T-cell (primary cell): ENCODE measurements at regions of chr6 and their contacts with region 1.

Region 1: GRCh38 chr6:26025894-26026832 is 61.1 kb upstream of the HFE start:
- DNase-seq: peak; percentile 70 to 98 (median 96)
- ATAC-seq: peak; percentile 33 to 46 (median 36)
- H3K4me3 ChIP-seq: peak overlapping the region; percentile 63 to 88
- H3K4me3 Mint-ChIP-seq: peak overlapping the region; percentile 82 to 93 (median 92)
- H3K27ac ChIP-seq: peak overlapping the region; percentile 93
- H3K27ac Mint-ChIP-seq: peak overlapping the region; percentile 93 to 99
- H3K4me1 ChIP-seq: peaks cover 22 to 24% of the 10 kb centered on the region in 2 experiments
- H3K4me1 Mint-ChIP-seq: peaks cover 43 to 53% (median 44%) of the 10 kb centered on the region in 3 donors
- H3K27me3 ChIP-seq: no peaks in the 10 kb centered on the region
- H3K27me3 Mint-ChIP-seq: peaks cover 0 to 2% of the 10 kb centered on the region in 2 donors

Region 2: DNA sequence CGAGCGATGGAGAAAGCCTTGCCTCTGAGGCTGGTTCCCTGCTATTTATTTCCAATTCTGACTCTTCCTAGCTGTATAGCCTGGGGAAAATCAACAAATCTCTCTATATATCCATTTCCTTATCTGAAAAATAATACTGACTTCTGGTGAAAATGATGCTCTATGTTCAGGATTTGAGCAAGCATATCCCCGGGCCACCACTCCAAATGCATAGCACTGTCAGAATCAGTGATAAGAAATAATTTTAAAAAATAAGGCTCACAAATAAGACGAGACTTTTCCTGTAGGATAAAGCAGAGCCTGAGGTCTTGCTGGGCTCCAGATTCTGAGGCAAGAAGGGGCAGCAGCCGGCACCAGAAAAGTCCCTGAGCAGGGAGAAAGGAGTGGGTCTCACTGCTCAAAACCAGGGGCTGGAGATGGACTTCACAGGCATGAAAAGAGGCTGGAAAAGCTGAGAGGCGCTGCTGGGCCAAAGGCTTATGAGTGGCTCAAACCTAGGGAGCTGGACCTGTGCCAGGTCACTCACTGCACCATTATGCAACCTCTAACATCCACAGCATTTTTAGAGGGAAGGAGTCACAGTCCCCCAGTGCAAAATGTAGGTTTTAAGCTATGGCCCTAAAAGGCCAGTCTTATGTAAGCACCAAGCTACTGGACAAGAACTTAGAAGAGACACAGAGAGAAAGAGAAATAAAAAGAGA is 319.7 kb before region 1 on chr6:
- CTCF ChIA-PET with region 1: no interaction called
- POLR2A ChIA-PET with region 1: no interaction called
- DNase-seq: no peak
- ATAC-seq: no peak
- H3K4me3 ChIP-seq: no peak overlapping the region
- H3K4me3 Mint-ChIP-seq: no peak overlapping the region
- H3K27ac ChIP-seq: no peak overlapping the region
- H3K27ac Mint-ChIP-seq: no peak overlapping the region
- H3K4me1 ChIP-seq: no peaks in the 10 kb centered on the region
- H3K4me1 Mint-ChIP-seq: no peaks in the 10 kb centered on the region
- H3K27me3 ChIP-seq: peaks cover 0 to 4% of the 10 kb centered on the region in 2 experiments
- H3K27me3 Mint-ChIP-seq: peaks cover 8 to 27% of the 10 kb centered on the region in 2 donors

Region 3: DNA sequence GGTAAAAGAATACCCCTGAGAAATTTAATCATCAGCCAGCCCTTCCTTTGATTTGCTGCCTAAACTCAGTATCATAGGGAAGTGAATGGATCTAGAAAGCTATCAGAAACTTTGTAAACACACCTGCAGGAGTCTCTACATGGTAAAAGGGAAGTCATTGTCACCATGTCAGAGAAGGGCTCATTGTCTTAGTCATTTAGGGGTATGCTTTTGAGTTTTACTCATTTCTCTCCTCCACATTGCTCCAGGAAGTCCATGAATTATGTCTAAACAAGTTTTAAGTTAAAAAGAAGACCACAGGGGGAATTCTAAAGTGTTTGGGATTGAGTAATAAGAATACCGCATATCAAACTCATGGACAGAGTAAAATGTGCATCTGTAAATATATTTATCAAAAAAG is 196.8 kb before region 1 on chr6:
- CTCF ChIA-PET with region 1: no interaction called
- POLR2A ChIA-PET with region 1: no interaction called
- DNase-seq: no peak
- ATAC-seq: no peak
- H3K4me3 ChIP-seq: no peak overlapping the region
- H3K4me3 Mint-ChIP-seq: no peak overlapping the region
- H3K27ac ChIP-seq: no peak overlapping the region
- H3K27ac Mint-ChIP-seq: no peak overlapping the region
- H3K4me1 ChIP-seq: no peaks in the 10 kb centered on the region
- H3K4me1 Mint-ChIP-seq: no peaks in the 10 kb centered on the region
- H3K27me3 ChIP-seq: no peaks in the 10 kb centered on the region
- H3K27me3 Mint-ChIP-seq: peaks cover 19 to 26% of the 10 kb centered on the region in 2 donors

Region 4: DNA sequence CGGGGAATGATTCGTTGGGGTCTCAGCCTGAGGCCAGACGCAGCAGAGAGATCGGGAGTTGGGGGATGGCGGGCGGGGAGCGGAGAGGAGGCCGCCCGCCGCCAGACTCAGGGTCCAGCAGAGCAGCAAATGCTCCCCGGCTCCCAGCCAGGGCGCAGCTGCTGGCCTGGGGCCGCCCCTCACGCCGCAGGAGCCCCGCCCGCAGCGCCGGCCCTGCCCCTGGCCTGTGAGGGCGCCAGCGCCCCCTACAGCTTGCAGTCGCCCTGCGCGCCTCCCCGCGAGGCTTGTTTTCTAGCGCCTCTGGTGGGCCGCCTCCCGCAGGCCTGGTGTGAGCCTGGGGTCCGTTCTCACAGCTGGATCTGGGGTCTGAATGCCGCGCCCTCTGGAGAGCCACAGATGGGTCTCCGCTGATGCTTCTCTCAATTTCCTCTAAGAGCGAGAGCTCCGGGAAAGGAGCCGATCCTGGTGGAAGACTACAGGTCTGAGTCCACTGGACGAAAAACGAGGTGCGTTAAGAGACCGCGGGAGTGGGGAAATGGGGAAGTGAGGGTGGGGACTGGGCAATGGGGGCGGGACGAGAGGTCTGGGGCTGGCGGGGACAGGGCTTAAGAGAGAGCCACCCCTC is 33.6 kb before region 1 on chr6:
- CTCF ChIA-PET with region 1: interaction called in 1 of 2 experiments, 14 read pairs
- POLR2A ChIA-PET with region 1: interaction called, 7 to 19 read pairs
- DNase-seq: peak; percentile 77 to 96 (median 89)
- ATAC-seq: peak; percentile 94 to 98 (median 96)
- H3K4me3 ChIP-seq: peak overlapping the region; percentile 70 to 89
- H3K4me3 Mint-ChIP-seq: peak overlapping the region; percentile 91 to 95 (median 94)
- H3K27ac ChIP-seq: peak overlapping the region; percentile 77
- H3K27ac Mint-ChIP-seq: peak overlapping the region; percentile 92 to 94
- H3K4me1 ChIP-seq: peaks cover 9 to 17% of the 10 kb centered on the region in 2 experiments
- H3K4me1 Mint-ChIP-seq: peaks cover 21 to 36% (median 27%) of the 10 kb centered on the region in 3 donors
- H3K27me3 ChIP-seq: no peaks in the 10 kb centered on the region
- H3K27me3 Mint-ChIP-seq: no peaks in the 10 kb centered on the region

Region 5: GRCh38 chr6:26003102-26003694 is 23.0 kb before region 1 on chr6:
- CTCF ChIA-PET with region 1: interaction called, 4 to 16 read pairs
- POLR2A ChIA-PET with region 1: interaction called, 6 read pairs
- DNase-seq: peak in 26 of 35 experiments; percentile 11 to 69 (median 34)
- ATAC-seq: peak in 2 of 4 experiments; percentile 30 to 55
- H3K4me3 ChIP-seq: no peak overlapping the region
- H3K4me3 Mint-ChIP-seq: no peak overlapping the region
- H3K27ac ChIP-seq: no peak overlapping the region
- H3K27ac Mint-ChIP-seq: no peak overlapping the region
- H3K4me1 ChIP-seq: peaks cover 0 to 6% of the 10 kb centered on the region in 2 experiments
- H3K4me1 Mint-ChIP-seq: peaks cover 4 to 7% (median 6%) of the 10 kb centered on the region in 3 donors
- H3K27me3 ChIP-seq: no peaks in the 10 kb centered on the region
- H3K27me3 Mint-ChIP-seq: no peaks in the 10 kb centered on the region

Region 6: DNA sequence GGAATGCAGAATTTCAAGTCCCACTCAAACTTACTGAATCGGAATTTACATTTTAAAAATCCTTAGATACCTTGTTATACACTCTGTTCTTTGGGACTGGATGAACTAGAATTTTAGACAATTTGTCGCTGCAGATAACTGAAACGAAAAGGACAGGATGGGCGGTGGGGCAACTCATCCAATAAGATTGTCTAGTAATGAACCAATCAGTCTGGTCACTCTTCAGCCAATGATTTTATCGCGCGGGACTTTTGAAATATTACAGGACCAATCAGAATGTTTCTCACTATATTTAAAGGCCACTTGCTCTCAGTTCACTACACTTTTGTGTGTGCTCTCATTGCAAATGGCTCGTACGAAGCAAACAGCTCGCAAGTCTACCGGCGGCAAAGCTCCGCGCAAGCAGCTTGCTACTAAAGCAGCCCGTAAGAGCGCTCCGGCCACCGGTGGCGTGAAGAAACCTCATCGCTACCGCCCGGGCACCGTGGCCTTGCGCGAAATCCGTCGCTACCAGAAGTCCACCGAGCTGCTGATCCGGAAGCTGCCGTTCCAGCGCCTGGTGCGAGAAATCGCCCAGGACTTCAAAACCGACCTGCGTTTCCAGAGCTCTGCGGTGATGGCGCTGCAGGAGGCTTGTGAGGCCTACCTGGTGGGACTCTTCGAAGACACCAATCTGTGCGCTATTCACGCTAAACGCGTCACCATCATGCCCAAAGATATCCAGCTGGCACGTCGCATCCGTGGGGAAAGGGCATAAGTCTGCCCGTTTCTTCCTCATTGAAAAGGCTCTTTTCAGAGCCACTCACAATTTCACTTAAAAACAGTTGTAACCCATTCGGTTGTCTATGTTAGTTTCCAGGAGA is 19.1 kb after region 1 on chr6:
- CTCF ChIA-PET with region 1: interaction called, 9 to 76 read pairs
- POLR2A ChIA-PET with region 1: interaction called, 56 to 682 read pairs
- DNase-seq: peak; percentile 45 to 90 (median 78)
- ATAC-seq: peak; percentile 63 to 66 (median 64)
- H3K4me3 ChIP-seq: peak overlapping the region; percentile 77 to 83
- H3K4me3 Mint-ChIP-seq: peak overlapping the region; percentile 84 to 91 (median 90)
- H3K27ac ChIP-seq: peak overlapping the region; percentile 90
- H3K27ac Mint-ChIP-seq: peak overlapping the region; percentile 98
- H3K4me1 ChIP-seq: peaks cover 5 to 26% of the 10 kb centered on the region in 2 experiments
- H3K4me1 Mint-ChIP-seq: peaks cover 15 to 27% (median 26%) of the 10 kb centered on the region in 3 donors
- H3K27me3 ChIP-seq: no peaks in the 10 kb centered on the region
- H3K27me3 Mint-ChIP-seq: no peaks in the 10 kb centered on the region

Region 7: DNA sequence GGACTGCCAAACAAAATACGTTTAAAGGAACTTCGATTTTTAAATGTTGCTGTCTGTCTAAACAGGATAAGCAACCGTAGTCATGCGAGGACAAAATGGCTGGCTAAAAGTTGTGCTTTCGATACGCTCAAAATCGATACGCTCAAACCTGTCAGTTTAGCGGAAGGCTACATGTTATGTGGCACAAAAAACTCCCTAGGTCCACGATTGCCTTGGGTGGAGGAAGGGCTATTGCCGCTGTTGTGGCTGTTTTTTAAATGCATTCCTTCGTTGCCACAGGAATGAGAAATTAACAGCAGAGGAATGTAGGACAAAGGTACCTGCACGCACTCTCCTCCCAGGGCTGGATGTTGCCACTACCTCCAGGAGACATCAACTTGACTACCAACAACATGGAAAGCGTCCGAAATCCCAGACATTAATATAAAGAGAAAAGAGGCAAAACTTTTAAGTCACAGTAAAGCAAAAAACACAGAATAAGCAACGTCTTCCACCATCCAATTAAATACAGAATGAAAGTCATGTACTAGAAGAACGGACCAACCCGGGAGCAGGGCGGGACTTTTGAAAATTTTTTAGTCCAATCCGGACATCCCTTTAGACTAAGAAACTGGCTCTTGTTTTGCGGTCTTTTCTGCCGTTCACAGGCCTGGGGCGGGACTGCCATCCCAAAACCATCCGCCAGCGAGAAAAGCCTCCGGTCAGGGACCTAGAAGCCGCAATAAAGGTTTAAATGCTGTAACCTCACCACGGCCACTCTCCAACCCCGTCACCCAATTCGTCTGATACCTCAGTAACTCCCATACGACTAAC is 28.9 kb after region 1 on chr6:
- CTCF ChIA-PET with region 1: interaction called in 1 of 2 experiments, 19 read pairs
- POLR2A ChIA-PET with region 1: interaction called, 5 to 30 read pairs
- DNase-seq: peak; percentile 63 to 95 (median 86)
- ATAC-seq: peak; percentile 60 to 73 (median 67)
- H3K4me3 ChIP-seq: peak overlapping the region; percentile 87 to 98
- H3K4me3 Mint-ChIP-seq: peak overlapping the region; percentile 95 to 97 (median 96)
- H3K27ac ChIP-seq: peak overlapping the region; percentile 96
- H3K27ac Mint-ChIP-seq: peak overlapping the region; percentile 97 to 100
- H3K4me1 ChIP-seq: peaks cover 16 to 26% of the 10 kb centered on the region in 2 experiments
- H3K4me1 Mint-ChIP-seq: peaks cover 21 to 26% (median 23%) of the 10 kb centered on the region in 3 donors
- H3K27me3 ChIP-seq: no peaks in the 10 kb centered on the region
- H3K27me3 Mint-ChIP-seq: no peaks in the 10 kb centered on the region

Region 8: GRCh38 chr6:26065952-26066380 is 39.8 kb after region 1 on chr6:
- CTCF ChIA-PET with region 1: interaction called in 1 of 2 experiments, 11 read pairs
- POLR2A ChIA-PET with region 1: interaction called in 1 of 2 experiments, 5 read pairs
- DNase-seq: peak in 30 of 35 experiments; percentile 26 to 84 (median 41)
- ATAC-seq: peak; percentile 85 to 88 (median 86)
- H3K4me3 ChIP-seq: no peak overlapping the region
- H3K4me3 Mint-ChIP-seq: no peak overlapping the region
- H3K27ac ChIP-seq: no peak overlapping the region
- H3K27ac Mint-ChIP-seq: no peak overlapping the region
- H3K4me1 ChIP-seq: peaks cover 0 to 3% of the 10 kb centered on the region in 2 experiments
- H3K4me1 Mint-ChIP-seq: peaks cover 5 to 10% (median 10%) of the 10 kb centered on the region in 3 donors
- H3K27me3 ChIP-seq: no peaks in the 10 kb centered on the region
- H3K27me3 Mint-ChIP-seq: no peaks in the 10 kb centered on the region